ENCODE measurements at regions of chr11 and their contacts with region 1.

Region 1: DNA sequence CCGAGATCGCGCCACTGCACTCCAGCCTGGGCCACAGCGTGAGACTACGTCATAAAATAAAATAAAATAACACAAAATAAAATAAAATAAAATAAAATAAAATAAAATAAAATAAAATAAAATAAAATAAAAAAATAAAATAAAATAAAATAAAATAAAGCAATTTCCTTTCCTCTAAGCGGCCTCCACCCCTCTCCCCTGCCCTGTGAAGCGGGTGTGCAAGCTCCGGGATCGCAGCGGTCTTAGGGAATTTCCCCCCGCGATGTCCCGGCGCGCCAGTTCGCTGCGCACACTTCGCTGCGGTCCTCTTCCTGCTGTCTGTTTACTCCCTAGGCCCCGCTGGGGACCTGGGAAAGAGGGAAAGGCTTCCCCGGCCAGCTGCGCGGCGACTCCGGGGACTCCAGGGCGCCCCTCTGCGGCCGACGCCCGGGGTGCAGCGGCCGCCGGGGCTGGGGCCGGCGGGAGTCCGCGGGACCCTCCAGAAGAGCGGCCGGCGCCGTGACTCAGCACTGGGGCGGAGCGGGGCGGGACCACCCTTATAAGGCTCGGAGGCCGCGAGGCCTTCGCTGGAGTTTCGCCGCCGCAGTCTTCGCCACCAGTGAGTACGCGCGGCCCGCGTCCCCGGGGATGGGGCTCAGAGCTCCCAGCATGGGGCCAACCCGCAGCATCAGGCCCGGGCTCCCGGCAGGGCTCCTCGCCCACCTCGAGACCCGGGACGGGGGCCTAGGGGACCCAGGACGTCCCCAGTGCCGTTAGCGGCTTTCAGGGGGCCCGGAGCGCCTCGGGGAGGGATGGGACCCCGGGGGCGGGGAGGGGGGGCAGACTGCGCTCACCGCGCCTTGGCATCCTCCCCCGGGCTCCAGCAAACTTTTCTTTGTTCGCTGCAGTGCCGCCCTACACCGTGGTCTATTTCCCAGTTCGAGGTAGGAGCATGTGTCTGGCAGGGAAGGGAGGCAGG is at the start of gene GSTP1:
- DNase-seq: peak; percentile 84
- H3K4me3 Mint-ChIP-seq: peak within 1 kb of the TSS; percentile 95
- H3K27ac Mint-ChIP-seq: peak within 1 kb of the TSS; percentile 89
- H3K4me1 Mint-ChIP-seq: peaks cover 51% of the 10 kb centered on the region
- H3K27me3 Mint-ChIP-seq: peaks cover 39% of the 10 kb centered on the region

Region 2: DNA sequence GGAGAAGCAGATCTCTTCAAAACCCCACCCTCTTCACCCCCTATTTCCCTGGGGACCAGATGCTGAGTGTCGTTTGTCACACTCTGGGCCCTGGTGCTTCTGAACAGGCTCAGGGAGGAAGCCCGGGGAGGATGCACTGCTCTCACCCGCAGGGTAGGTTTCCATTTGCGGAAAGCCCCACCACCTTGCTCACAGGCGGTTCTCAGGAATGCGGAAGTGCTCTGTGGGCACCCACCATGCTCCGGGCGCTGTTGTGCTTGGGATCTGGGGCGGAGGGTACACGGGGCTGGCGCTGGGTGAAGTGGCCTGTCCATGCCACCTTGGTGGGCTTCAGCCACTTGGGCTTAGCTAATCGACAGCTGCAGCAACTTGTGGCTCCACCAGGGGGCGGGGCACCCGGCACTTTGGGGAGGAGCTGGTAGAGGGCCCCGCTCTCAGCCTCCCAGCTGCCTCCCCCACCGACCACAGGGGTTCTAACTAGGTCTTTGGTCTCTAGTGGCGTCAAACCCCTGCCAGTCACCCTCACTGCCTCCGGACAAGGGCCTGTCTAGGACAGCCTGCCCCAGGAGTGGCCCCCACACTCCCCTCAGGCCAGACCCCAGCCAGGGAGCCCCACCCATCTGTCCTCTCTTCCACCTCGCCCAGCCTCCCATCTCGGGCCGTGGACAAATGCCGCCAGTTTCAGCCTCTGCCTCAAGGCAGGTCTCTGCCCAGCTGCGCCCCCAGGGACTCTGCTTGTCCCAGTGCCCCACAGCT is 30.6 kb after region 1 on chr11:
- CTCF ChIA-PET with region 1: interaction called, 10 read pairs
- DNase-seq: peak; percentile 89
- H3K4me3 Mint-ChIP-seq: peak overlapping the region; percentile 67
- H3K27ac Mint-ChIP-seq: peak overlapping the region; percentile 98
- H3K4me1 Mint-ChIP-seq: peaks cover 37% of the 10 kb centered on the region
- H3K27me3 Mint-ChIP-seq: peaks cover 14% of the 10 kb centered on the region

Region 3: DNA sequence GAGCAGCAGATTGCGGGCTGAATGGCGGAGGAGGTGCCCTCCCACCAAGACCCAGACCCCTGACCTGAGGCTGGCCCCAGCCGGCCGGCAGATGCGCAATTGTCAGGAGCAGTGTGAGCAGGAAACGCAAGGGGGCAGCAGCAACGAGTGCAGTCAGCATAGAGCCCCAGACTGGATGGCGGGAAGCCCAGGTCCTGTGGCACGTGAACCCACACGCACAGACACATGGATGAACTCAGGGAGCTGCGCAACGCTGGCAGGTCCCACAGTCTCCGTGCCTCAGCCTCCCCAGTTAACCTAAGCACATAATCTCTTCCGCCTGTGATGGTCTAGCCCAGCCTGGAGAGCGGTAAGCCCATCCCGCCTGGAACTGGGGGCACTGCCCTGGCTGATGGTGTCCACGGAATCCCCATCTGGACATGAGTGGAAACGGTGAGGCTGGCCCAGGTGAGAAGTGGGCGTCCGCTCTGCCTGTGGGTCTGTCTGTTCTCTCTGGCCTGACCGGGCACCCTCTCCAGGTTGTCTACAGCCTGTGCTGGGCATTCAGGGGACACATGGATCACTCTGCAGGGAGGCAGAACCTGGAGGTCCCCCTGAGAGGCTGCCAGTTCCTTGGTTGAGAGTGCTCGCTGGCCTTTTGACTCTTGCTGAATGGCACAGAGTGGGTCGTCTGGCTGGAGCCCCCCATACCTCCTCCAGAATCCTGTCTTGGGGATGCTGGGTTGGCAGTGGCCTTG is 56.7 kb after region 1 on chr11:
- CTCF ChIA-PET with region 1: no interaction called
- DNase-seq: peak; percentile 70
- H3K4me3 Mint-ChIP-seq: no peak overlapping the region
- H3K27ac Mint-ChIP-seq: no peak overlapping the region
- H3K4me1 Mint-ChIP-seq: peaks cover 8% of the 10 kb centered on the region
- H3K27me3 Mint-ChIP-seq: peaks cover 32% of the 10 kb centered on the region

Measured in activated naive CD4-positive, alpha-beta T cell treated with anti-CD3 and anti-CD28 coated beads, Interleukin-2, amount 10 ng/mL, durations not matched to agents 7 days and 5 days (primary cell).